ENCODE measurements at regions of chr22 and their contacts with region 1.

Region 1: DNA sequence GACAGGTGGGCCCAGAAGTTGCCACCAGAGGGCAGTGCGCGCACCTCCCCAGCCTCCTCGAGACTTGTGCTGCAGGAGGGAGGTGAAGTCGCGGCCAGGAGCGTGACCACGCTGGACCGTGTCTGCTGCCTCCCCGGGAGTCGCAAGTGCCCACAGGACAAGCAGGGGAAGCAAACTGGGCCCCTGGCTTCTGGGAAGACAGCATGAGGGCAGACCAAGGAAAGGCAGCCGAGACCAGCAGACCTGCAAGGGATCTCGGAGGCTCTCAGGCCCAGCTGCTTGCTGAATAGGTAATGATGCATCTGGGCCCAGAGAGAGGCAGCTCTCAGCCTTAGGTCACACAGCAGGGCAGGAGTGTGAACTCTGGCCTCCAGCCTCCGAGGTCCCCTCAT is 17.0 kb upstream of the IL2RB start:
- DNase-seq: peak; percentile 73
- ATAC-seq: peak; percentile 44
- H3K4me3 Mint-ChIP-seq: peak overlapping the region; percentile 7
- H3K27ac Mint-ChIP-seq: peak overlapping the region; percentile 21
- H3K4me1 Mint-ChIP-seq: peaks cover 39% of the 10 kb centered on the region
- H3K27me3 Mint-ChIP-seq: no peaks in the 10 kb centered on the region
- CTCF ChIP-seq: peak; percentile 69

Region 2: DNA sequence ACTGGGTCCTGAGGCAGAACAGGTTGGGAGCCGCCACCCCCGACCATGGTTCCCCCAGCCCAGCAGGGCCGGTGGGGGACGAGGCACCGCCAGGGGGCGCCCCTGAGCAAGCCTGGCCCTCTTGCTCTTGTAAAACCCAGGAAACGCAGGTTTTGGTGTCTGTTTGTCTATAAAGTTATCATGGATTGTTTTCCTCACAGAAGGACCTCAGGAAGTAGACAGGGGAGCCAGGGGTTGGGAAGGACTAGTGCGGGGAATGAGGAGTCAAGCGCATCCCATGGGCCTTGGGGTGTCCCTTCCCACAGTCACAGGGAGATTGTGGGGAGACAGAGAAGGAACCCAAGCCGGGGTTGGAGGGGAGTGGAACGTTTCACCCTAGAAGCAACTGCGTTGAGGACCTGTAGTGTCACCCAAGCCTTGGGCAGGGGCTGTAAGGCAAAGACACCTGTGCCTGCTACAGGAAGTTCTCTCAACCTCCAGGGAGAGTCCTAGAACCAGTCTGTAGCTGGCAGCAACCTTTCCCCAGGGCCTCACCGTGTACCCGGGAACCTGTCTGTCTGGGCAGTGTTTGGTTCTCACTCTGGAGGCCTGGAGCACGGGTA is 88.7 kb before region 1 on chr22:
- CTCF ChIA-PET with region 1: interaction called, 5 read pairs
- POLR2A ChIA-PET with region 1: interaction called, 4 read pairs
- intact Hi-C with region 1: loop called (anchors 1 kb)
- DNase-seq: peak; percentile 81
- ATAC-seq: peak; percentile 60
- H3K4me3 Mint-ChIP-seq: no peak overlapping the region
- H3K27ac Mint-ChIP-seq: peak overlapping the region; percentile 50
- H3K4me1 Mint-ChIP-seq: peaks cover 25% of the 10 kb centered on the region
- H3K27me3 Mint-ChIP-seq: no peaks in the 10 kb centered on the region
- CTCF ChIP-seq: peak; percentile 87

Region 3: GRCh38 chr22:37148742-37149665 is 17.7 kb before region 1 on chr22:
- CTCF ChIA-PET with region 1: interaction called, 3 read pairs
- POLR2A ChIA-PET with region 1: interaction called, 20 read pairs
- intact Hi-C with region 1: no loop called
- DNase-seq: no peak
- ATAC-seq: no peak
- H3K4me3 Mint-ChIP-seq: peak overlapping the region; percentile 65
- H3K27ac Mint-ChIP-seq: no peak overlapping the region
- H3K4me1 Mint-ChIP-seq: peaks cover 25% of the 10 kb centered on the region
- H3K27me3 Mint-ChIP-seq: no peaks in the 10 kb centered on the region
- CTCF ChIP-seq: no peak

Region 4: DNA sequence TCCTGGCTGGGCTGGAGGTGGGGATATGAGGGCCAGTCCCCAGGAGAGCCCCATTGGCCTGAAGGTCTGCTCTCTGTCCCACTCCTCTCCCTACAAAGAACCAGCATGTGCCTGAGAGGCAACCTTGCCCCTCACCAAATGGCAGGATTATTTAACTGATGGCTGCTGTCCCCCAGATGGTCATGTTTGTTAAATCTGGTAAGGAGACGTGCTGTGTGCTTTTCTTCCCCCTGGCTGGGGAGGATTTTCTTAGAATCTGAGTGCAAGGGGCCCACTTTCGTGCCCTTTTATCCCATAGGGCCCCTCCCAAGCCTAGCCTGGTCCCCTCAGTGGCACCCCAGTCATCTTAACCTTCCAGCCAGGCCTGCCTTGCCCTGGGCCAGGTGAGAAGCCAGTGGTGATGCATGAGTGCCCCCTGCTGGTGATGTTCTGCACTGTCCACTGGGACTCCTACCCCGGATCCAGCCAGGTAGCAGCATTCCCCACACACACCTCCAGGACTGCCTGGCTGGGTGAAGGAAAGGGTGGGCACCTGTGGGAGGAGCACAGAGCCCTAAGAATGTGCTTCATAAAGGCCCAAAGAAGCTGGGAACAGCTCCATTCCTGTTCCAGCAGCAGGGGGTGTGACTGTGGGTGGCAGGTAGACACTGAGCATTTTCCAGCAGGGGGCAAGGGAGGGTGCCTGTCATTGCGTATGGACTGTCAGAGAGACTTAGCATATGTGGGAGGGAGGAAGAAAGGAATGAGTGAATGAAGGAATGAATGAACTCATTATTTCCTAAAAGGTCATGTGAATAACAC is 290.6 kb after region 1 on chr22:
- CTCF ChIA-PET with region 1: interaction called, 3 read pairs
- POLR2A ChIA-PET with region 1: no interaction called
- intact Hi-C with region 1: loop called (anchors 1 kb)
- DNase-seq: peak; percentile 71
- ATAC-seq: peak; percentile 95
- H3K4me3 Mint-ChIP-seq: no peak overlapping the region
- H3K27ac Mint-ChIP-seq: no peak overlapping the region
- H3K4me1 Mint-ChIP-seq: no peaks in the 10 kb centered on the region
- H3K27me3 Mint-ChIP-seq: no peaks in the 10 kb centered on the region
- CTCF ChIP-seq: peak; percentile 42

Measured in activated B cell treated with CpG ODN at 0.5 μM for 24 hours (primary cell).